T-cell (primary cell): ENCODE measurements at regions of chr2 and their contacts with region 1.

Region 1: DNA sequence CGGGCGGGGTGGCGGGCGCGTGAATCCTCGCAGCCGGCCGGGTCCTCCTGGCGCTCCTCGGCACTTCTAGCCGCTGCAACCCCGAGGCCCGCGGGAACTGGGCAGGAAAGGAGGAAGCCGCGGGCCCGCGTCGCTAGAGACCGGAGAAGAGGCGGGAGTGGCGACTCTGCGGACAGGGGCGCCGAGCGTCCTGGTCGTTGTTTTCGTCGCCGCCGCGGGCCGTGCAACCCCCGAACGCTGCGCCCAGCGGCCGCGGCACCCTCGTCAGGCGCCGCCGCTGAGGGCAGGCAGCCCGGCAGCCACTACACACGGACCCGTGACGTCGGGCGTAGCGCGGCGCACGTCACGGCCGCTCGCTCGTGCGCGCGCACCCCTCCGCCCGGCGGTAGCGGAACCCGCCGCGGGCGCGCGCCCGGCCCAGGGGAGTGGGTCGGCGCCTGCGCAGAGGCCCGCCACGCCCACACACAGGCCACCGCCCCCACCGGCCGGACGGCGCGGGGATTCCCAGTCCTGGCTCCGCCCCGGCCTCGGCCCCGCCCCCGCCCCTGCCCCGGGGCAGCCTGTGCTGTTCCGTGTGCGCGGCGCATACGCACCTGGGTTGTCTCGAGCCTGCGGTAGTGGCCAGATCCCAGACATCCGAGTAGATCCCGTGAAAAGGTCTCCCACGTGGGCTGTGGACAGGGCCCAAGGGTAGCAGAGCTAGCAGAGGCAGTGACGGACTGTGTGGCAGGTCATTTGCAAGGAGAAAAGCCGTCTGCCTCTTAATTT is at the start of gene MAP3K2:
- DNase-seq: peak; percentile 87 to 99 (median 94)
- ATAC-seq: peak; percentile 80 to 85 (median 82)
- H3K4me3 ChIP-seq: peak within 1 kb of the TSS; percentile 49 to 71
- H3K4me3 Mint-ChIP-seq: peak within 1 kb of the TSS; percentile 86 to 91 (median 88)
- H3K27ac ChIP-seq: peak within 1 kb of the TSS; percentile 100
- H3K27ac Mint-ChIP-seq: peak within 1 kb of the TSS; percentile 98 to 99
- H3K4me1 ChIP-seq: peaks cover 19 to 28% of the 10 kb centered on the region in 2 experiments
- H3K4me1 Mint-ChIP-seq: peaks cover 63 to 72% (median 68%) of the 10 kb centered on the region in 3 donors
- H3K27me3 ChIP-seq: no peaks in the 10 kb centered on the region
- H3K27me3 Mint-ChIP-seq: no peaks in the 10 kb centered on the region
- total RNA-seq, gene MAP3K2: 81.6 to 89.1 (median 83.2) TPM

Region 2: DNA sequence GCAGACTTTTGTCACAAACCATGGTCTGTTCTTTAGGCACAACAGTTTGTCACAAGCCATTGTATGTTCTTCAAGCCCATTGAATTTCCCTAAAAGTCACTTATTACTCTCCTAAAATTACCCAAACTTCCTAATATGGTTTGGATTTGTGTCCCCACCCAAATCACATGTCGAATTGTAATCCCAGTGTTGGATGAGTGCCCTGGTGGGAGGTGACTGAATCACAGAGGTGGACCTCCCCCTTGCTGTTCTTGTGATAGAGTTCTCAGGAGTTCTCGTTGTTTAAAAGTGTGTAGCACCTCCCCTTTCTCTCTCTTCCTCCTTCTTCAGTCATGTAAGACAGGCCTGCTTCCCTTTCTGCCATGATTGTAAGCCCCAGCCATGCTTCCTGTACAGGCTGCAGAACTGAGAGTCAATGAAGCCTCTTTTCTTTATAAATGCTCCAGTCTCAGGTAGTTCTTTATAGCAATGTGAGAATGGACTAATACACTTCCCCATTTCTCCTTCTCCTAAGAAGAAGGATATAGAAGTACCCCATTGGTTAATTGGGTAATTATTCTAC is 743.1 kb before region 1 on chr2:
- CTCF ChIA-PET with region 1: no interaction called
- POLR2A ChIA-PET with region 1: no interaction called
- DNase-seq: no peak
- ATAC-seq: peak in 1 of 4 experiments; percentile 38
- H3K4me3 ChIP-seq: no peak overlapping the region
- H3K4me3 Mint-ChIP-seq: no peak overlapping the region
- H3K27ac ChIP-seq: no peak overlapping the region
- H3K27ac Mint-ChIP-seq: peak overlapping the region in 1 of 2 donors; percentile 30
- H3K4me1 ChIP-seq: no peaks in the 10 kb centered on the region
- H3K4me1 Mint-ChIP-seq: peaks cover 3 to 12% (median 7%) of the 10 kb centered on the region in 3 donors
- H3K27me3 ChIP-seq: peaks cover 0 to 5% of the 10 kb centered on the region in 2 experiments
- H3K27me3 Mint-ChIP-seq: no peaks in the 10 kb centered on the region

Region 3: GRCh38 chr2:127321303-127321702 is 66.5 kb before region 1 on chr2:
- CTCF ChIA-PET with region 1: no interaction called
- POLR2A ChIA-PET with region 1: no interaction called
- DNase-seq: no peak
- ATAC-seq: no peak
- H3K4me3 ChIP-seq: no peak overlapping the region
- H3K4me3 Mint-ChIP-seq: no peak overlapping the region
- H3K27ac ChIP-seq: no peak overlapping the region
- H3K27ac Mint-ChIP-seq: no peak overlapping the region
- H3K4me1 ChIP-seq: no peaks in the 10 kb centered on the region
- H3K4me1 Mint-ChIP-seq: no peaks in the 10 kb centered on the region
- H3K27me3 ChIP-seq: no peaks in the 10 kb centered on the region
- H3K27me3 Mint-ChIP-seq: no peaks in the 10 kb centered on the region

Region 4: GRCh38 chr2:127415593-127416505 is 28.0 kb after region 1 on chr2:
- CTCF ChIA-PET with region 1: interaction called, 3 to 22 read pairs
- POLR2A ChIA-PET with region 1: interaction called, 3 to 4 read pairs
- DNase-seq: peak; percentile 56 to 91 (median 79)
- ATAC-seq: peak; percentile 89 to 94 (median 92)
- H3K4me3 ChIP-seq: peak overlapping the region; percentile 66 to 86
- H3K4me3 Mint-ChIP-seq: peak overlapping the region; percentile 72 to 84 (median 74)
- H3K27ac ChIP-seq: no peak overlapping the region
- H3K27ac Mint-ChIP-seq: peak overlapping the region in 1 of 2 donors; percentile 25
- H3K4me1 ChIP-seq: peaks cover 0 to 18% of the 10 kb centered on the region in 2 experiments
- H3K4me1 Mint-ChIP-seq: peaks cover 20 to 36% (median 28%) of the 10 kb centered on the region in 3 donors
- H3K27me3 ChIP-seq: peaks cover 0 to 12% of the 10 kb centered on the region in 2 experiments
- H3K27me3 Mint-ChIP-seq: peaks cover 5% of the 10 kb centered on the region in 2 donors